Head of caudate nucleus (tissue), 42 donors: ENCODE measurements at regions of chr7 and their contacts with region 1.

Region 1: DNA sequence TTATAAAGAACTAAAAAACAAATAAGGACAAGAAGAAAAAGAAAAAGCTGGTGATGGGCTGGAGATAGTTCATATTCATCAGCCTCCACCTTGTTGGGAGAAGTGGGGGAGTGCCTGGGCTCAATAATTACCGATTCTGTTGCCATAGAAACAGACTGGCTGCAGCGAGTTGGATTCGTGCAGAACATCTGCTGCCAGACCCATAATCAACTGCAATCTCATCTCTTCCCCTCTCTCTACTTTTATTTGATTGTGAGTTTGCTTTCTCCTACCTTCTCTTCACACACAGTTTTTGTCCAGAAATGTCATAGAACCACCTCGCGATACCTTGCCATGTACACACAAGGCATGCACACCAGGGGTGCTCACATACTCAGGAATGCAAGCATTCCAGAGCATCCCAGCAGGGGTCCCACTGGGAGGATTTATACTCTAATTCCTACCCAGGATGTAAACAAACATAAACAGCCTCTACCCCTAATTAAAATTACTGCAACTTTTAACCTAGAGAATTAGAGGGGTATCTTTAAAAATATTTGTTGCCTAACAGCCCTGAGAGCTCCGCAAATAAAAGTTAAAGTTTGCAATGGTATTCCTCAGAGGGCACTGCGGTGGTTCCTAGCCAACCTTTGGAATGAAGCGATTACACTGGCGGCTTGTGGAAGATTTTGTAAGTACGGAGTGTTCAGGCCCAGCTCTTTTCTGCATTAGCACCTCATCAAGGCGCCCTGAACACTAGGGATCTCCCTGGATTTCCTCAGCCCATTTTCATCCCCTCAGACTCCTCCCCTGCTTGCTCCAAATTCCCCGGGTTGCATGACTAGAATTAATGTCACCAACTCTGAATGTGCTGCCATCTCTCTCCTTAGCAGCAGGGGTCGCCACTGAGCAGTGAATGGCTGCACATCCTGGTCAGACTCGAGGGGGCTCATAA is 262.4 kb upstream of the AOAH start:
- DNase-seq: peak; percentile 59 to 92 (median 83)

Region 2: DNA sequence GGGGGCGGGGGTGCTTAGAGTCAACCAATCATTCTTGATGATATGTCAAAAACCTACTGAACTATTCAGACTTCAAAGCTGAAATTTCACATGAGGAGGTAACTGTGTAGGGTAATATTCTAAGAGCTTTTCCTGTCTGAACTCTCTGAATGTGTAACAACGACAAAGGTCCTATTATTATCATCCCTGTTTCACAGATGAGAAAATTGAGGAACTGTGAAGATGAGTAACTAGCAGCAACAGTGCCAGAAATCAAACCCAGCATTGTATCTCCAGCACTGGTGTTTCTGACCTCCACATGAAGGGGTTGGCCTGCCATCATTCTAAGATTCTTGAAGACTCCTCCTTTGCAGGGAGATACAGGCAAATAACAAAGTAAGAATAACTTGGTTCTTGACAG is 32.3 kb after region 1 on chr7:
- intact Hi-C with region 1: no loop called
- DNase-seq: no peak

Region 3: GRCh38 chr7:37181550-37181932 is 194.8 kb after region 1 on chr7:
- intact Hi-C with region 1: loop called (anchors 5 kb)
- DNase-seq: no peak